ENCODE measurements at regions of chr15 and their contacts with region 1.

Region 1: DNA sequence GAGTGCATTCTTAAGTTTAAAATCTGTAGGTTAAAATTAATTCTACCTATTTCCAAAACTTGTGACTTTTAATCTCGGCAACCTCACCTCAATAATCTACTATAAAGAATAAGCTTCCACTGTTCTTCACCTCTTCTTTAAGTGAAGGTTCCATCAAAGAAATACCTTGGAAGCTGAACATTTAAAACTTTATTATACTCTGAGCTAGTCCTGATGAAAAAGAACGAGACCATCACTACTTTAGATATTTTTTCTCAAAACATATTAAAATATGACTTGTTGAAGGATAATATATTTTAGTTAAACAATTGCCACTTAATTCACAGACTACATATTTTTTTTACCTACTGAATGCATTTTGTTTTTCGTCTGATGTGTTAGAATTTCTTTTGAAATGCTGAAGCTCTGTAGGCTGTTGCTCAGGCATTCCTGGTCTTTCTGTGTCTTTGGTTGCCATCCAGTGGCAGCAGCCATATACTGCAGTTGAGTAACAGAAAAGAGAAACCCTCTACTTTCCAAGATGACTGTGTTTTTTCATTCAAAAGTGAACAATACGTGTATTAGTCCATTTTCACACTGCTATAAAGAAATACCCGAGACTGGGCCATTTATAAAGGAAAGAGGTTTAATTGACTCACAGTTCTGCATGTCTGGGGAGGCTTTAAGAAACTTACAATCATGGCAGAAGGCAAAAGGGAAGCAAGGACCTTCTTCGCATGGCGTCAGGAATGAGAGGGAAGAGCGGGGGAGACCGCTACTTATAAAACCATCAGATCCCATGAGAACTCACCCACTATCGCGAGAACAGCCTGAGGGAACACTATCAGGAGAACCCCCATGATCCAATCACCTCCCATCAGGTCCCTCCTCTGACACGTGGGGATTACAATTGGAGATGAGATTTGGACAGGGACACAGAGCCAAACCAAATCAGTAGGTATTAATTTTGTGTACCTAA is 4.5 kb upstream of the GOLGA8B start:
- DNase-seq: peak; percentile 71 to 87 (median 79)
- H3K4me3 ChIP-seq: peak overlapping the region in 1 of 4 donors; percentile 49
- H3K27ac ChIP-seq: peak overlapping the region in 1 of 5 donors; percentile 75
- H3K4me1 ChIP-seq: peaks cover 8 to 9% of the 10 kb centered on the region in 2 donors
- H3K27me3 ChIP-seq: no peaks in the 10 kb centered on the region
- CTCF ChIP-seq: peak; percentile 59 to 88 (median 84)
- POLR2A ChIP-seq: peak; percentile 73 to 80

Region 2: DNA sequence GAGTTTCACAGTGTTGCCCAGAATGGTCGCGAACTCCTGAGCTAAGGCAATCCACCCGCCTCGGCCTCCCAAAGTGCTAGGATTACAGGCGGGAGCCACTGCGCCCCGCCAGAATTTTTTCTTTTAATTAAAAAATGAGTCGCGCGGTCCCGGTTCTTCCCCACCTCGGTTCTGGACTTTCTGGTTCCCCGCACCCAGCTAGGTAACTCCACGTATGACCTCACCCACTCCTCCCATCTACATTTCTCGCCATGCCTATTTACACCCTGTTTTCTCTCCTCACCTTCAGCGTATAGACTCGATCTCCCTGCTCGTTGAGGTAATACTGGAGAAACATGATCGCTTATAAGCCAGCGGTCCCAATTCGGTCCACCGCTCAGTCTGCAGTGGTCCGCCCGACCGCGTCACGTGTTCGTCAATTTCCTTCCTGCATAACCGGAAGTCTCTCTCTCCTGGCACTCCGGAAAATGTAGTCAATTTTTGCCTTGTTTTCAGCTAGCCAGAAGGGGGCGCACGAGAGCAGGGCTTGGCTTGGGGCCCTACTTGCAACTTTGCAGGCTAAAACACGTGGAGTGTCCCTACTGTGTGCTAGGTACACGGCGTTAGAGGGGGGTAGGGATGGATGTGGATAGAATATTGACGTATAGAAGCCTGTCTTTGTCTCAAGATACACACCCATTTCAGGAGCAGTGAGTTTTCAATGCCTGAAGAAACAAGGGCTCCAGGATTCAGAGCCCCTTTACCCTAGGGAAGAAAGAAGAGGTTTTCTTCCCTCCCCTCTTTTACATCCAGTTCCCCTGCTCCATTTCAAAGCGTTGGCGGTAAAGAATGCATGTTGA is 245.0 kb before region 1 on chr15 and contains the starts of genes NOP10 and NUTM1:
- intact Hi-C with region 1: loop called in 1 of 2 experiments (anchors 10 kb)
- DNase-seq: peak; percentile 91 to 96 (median 93)
- H3K4me3 ChIP-seq: peak within 1 kb of the TSS; percentile 6 to 84 (median 62)
- H3K27ac ChIP-seq: peak within 1 kb of the TSS; percentile 78 to 93 (median 90)
- H3K4me1 ChIP-seq: peaks cover 5 to 10% of the 10 kb centered on the region in 2 donors
- H3K27me3 ChIP-seq: no peaks in the 10 kb centered on the region
- CTCF ChIP-seq: peak; percentile 94 to 98 (median 97)
- POLR2A ChIP-seq: peak in 1 of 2 donors; percentile 68
- total RNA-seq, gene NOP10: 136 to 353 (median 174) TPM
- total RNA-seq, gene NUTM1: 0.22 TPM in 1 of 9 donors, not detected in the others

Region 3: DNA sequence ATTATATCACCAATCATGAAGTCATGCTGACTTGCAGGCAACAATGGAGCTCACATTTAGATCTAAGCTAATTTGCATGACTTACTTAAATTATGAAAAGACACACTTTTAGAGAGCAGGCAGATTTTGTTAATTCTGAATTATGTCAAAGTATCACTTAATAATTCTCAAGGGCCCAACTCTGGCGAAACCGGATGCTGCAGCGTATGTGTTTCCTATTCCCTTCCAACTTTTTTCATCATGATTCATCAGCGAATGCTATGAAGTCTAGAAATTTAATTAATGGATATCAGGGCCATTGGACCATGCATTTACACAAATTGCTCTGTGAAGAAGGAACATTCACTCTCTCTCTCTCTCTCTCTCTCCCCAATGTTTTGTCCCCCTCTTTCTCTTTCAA is 86.9 kb before region 1 on chr15:
- intact Hi-C with region 1: loop called in 1 of 2 experiments (anchors 10 kb)
- DNase-seq: no peak
- H3K4me3 ChIP-seq: no peak overlapping the region
- H3K27ac ChIP-seq: no peak overlapping the region
- H3K4me1 ChIP-seq: no peaks in the 10 kb centered on the region
- H3K27me3 ChIP-seq: no peaks in the 10 kb centered on the region
- CTCF ChIP-seq: no peak
- POLR2A ChIP-seq: no peak